ENCODE measurements at regions of chr12 and their contacts with region 1.

Region 1: GRCh38 chr12:114668151-114668885 is 15.7 kb downstream of the TBX3 start:
- DNase-seq: peak; percentile 73
- H3K4me3 ChIP-seq: peak overlapping the region; percentile 68
- H3K27ac ChIP-seq: peak overlapping the region; percentile 74
- H3K4me1 ChIP-seq: peaks cover 63% of the 10 kb centered on the region
- H3K27me3 ChIP-seq: peaks cover 75% of the 10 kb centered on the region
- CTCF ChIP-seq: peak; percentile 74

Region 2: GRCh38 chr12:114580306-114580705 is 88.0 kb before region 1 on chr12:
- intact Hi-C with region 1: no loop called
- DNase-seq: no peak
- H3K4me3 ChIP-seq: no peak overlapping the region
- H3K27ac ChIP-seq: no peak overlapping the region
- H3K4me1 ChIP-seq: no peaks in the 10 kb centered on the region
- H3K27me3 ChIP-seq: peaks cover 82% of the 10 kb centered on the region
- CTCF ChIP-seq: no peak

Region 3: GRCh38 chr12:114888448-114888847 is 220.1 kb after region 1 on chr12:
- intact Hi-C with region 1: no loop called
- DNase-seq: no peak
- H3K4me3 ChIP-seq: no peak overlapping the region
- H3K27ac ChIP-seq: no peak overlapping the region
- H3K4me1 ChIP-seq: no peaks in the 10 kb centered on the region
- H3K27me3 ChIP-seq: peaks cover 52% of the 10 kb centered on the region
- CTCF ChIP-seq: no peak

Region 4: DNA sequence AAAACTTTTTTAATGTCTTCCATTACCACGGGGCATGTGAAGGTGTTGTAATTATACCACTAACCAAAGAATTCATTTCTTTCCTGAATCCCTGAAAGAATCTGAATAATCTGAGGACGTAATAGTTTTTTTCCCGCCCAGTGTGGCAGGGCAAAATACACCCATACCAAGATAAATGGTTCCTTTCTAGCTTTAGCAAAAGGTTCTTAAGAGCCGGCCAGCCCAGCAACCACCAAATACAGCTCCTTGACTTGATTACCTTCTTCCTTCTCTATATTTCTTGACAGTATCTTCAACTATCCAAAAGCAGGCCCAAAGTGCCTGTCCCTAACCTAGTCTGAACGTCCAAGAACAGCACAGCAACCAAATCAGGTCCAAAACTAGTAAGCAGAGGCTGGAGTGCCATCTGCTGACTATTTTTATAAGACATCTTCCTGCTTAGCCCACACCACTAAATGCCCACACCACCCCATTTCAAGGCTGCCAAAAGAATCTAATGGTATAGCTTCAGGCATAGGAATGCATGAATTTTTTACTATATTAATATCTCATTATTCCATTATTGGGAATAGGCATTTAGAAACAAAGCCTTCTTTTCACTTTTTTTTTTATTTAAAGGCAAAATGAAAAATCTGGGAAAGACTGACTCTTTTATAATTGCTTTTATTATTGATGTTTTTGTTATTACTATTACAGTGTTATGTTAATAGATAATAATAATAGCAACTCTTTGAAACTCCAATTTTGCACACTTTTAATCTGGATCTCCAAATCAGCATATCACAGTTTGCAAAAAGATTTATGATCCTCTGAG is 1084.8 kb after region 1 on chr12:
- intact Hi-C with region 1: loop called (anchors 5 kb)
- DNase-seq: no peak
- H3K4me3 ChIP-seq: no peak overlapping the region
- H3K27ac ChIP-seq: peak overlapping the region; percentile 42
- H3K4me1 ChIP-seq: peaks cover 19% of the 10 kb centered on the region
- H3K27me3 ChIP-seq: peaks cover 56% of the 10 kb centered on the region
- CTCF ChIP-seq: peak; percentile 81